ENCODE measurements at regions of chr7 and their contacts with region 1.

Region 1: DNA sequence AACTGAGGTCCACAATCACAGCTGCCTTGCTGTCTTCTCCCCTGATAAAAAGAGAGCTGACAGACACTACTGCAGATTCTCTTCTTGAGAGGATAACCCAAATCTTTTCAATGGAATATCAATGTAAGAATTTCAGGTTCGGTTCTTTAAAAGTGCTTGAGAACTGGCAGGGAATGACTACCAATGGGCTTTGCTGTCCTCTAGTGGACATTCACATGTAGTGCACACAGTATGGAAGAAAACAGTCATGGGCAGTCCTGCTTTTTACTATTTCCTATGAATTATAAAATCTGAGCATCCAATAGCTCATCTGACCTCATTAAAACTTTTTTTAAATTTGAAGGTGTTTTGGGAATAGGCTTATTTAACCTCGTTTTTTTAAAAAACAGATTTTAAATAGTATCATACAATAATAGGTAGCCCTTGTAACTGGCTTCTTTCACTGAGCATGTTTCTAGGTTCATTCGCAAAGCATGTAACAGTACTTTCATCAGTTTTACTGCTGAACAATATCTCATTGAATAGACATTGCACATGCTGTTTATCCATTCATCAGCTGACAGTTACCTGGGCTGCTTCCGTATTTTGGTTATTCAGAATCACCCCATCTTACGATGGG is 18.3 kb downstream of the FZD9 start:
- DNase-seq: no peak
- ATAC-seq: peak; percentile 68 to 87 (median 80)
- H3K4me3 ChIP-seq: no peak overlapping the region
- H3K27ac ChIP-seq: no peak overlapping the region
- H3K4me1 ChIP-seq: no peaks in the 10 kb centered on the region
- H3K27me3 ChIP-seq: no peaks in the 10 kb centered on the region
- CTCF ChIP-seq: peak; percentile 100

Region 2: GRCh38 chr7:73342645-73343044 is 109.2 kb before region 1 on chr7:
- intact Hi-C with region 1: loop called (anchors 2 kb)
- DNase-seq: no peak
- ATAC-seq: peak; percentile 87 to 97 (median 92)
- H3K4me3 ChIP-seq: peak overlapping the region; percentile 38
- H3K27ac ChIP-seq: no peak overlapping the region
- H3K4me1 ChIP-seq: no peaks in the 10 kb centered on the region
- H3K27me3 ChIP-seq: no peaks in the 10 kb centered on the region
- CTCF ChIP-seq: peak; percentile 55

Region 3: GRCh38 chr7:73470208-73470607 is 18.3 kb after region 1 on chr7:
- intact Hi-C with region 1: no loop called
- DNase-seq: no peak
- ATAC-seq: peak in 2 of 4 donors; percentile 34 to 51
- H3K4me3 ChIP-seq: no peak overlapping the region
- H3K27ac ChIP-seq: peak overlapping the region; percentile 13
- H3K4me1 ChIP-seq: peaks cover 4% of the 10 kb centered on the region
- H3K27me3 ChIP-seq: no peaks in the 10 kb centered on the region
- CTCF ChIP-seq: no peak

Measured in psoas muscle (tissue), 8 donors.